PC-9 (cell line): ENCODE measurements at regions of chr11 and their contacts with region 1.

Region 1: DNA sequence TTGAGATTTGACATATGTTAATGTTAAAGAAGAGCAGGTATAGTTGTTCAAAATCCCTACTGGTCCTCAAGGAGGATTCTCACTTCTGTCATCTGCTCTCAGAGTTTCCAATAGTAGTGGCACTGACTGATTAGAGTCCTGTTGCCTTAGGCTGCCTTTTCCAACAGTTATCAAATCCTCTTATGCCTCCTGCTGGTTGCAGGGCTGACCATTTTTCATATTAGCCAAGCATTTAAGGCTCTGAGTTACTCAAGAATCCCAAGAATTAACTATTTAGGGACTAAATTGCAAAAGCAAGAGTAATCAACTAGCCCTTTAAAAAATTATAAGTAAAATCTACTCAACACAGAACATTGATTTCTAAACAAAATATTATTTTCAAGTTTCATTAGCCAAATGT is 212.0 kb upstream of the CHORDC1 start:
- DNase-seq: no peak
- H3K4me3 ChIP-seq: no peak overlapping the region
- H3K27ac ChIP-seq: no peak overlapping the region
- H3K4me1 ChIP-seq: no peaks in the 10 kb centered on the region
- H3K27me3 ChIP-seq: no peaks in the 10 kb centered on the region
- CTCF ChIP-seq: peak; percentile 59

Region 2: DNA sequence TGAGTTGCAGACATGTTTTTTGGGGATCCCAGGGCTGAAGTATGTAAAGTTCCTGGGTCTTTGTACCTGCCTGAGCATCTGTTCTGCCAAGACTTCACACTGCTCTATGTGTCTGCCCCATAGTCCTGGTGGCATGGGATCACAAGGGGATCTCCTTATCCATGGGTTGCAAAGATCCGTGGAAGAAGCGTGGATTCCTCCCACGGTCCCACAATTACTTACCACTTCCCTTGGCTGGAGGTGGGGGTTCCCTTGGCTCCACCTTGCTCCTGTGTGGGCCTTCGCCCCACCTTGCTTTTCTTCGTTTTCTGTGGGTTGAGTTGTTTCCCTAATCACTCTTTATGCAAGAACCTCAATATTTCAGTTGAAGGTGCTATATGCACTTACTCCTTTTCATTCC is 54.7 kb before region 1 on chr11:
- CTCF ChIA-PET with region 1: interaction called, 10 read pairs
- POLR2A ChIA-PET with region 1: no interaction called
- intact Hi-C with region 1: no loop called
- DNase-seq: no peak
- H3K4me3 ChIP-seq: no peak overlapping the region
- H3K27ac ChIP-seq: no peak overlapping the region
- H3K4me1 ChIP-seq: no peaks in the 10 kb centered on the region
- H3K27me3 ChIP-seq: no peaks in the 10 kb centered on the region
- CTCF ChIP-seq: no peak

Region 3: GRCh38 chr11:90476442-90477007 is 41.7 kb after region 1 on chr11:
- CTCF ChIA-PET with region 1: interaction called, 11 read pairs
- POLR2A ChIA-PET with region 1: no interaction called
- intact Hi-C with region 1: no loop called
- DNase-seq: peak; percentile 25 to 57
- H3K4me3 ChIP-seq: no peak overlapping the region
- H3K27ac ChIP-seq: no peak overlapping the region
- H3K4me1 ChIP-seq: no peaks in the 10 kb centered on the region
- H3K27me3 ChIP-seq: no peaks in the 10 kb centered on the region
- CTCF ChIP-seq: peak; percentile 71